Activated B cell treated with CpG ODN at 0.5 μM for 24 hours (primary cell): ENCODE measurements at regions of chr2 and their contacts with region 1.

Region 1: DNA sequence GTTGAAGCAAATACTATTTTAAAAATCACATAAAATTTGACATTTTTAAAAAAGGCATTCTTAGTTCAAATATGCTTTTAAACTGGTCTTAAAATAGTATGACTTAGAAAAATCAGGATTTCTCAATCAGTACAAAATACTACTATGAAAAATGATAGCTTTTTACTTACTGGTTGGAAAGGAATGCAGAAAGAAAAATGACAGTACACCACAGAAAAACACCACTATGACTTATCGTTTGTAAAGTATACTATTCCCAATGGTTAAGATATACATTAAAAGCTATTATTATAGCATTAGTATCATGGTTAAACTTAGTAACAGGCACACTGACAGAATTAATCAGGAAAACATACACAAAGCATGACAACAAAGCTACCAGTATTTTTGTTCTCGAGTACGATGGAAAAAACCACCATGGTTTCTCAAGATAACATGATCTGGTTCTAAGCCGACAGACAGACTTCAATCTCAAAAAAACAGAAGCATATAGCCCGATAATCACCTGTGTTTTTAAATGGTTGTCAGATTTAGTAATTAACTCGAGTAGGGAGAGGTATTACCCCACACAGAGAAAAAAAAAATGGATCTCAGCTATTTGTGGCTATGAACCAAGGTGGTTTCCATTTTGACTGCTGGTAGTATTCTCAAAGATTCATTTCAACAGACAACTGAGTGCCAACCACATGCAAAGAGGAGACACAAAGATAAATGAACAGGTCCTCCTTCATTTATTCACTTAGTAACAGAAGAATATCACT is 39.1 kb downstream of the CUL3 start:
- DNase-seq: no peak
- ATAC-seq: no peak
- H3K4me3 Mint-ChIP-seq: peak overlapping the region; percentile 2
- H3K27ac Mint-ChIP-seq: peak overlapping the region; percentile 37
- H3K4me1 Mint-ChIP-seq: peaks cover 57% of the 10 kb centered on the region
- H3K27me3 Mint-ChIP-seq: no peaks in the 10 kb centered on the region
- CTCF ChIP-seq: no peak

Region 2: GRCh38 chr2:223993621-223994232 is 552.3 kb before region 1 on chr2:
- CTCF ChIA-PET with region 1: no interaction called
- POLR2A ChIA-PET with region 1: no interaction called
- intact Hi-C with region 1: no loop called
- DNase-seq: no peak
- ATAC-seq: peak; percentile 67
- H3K4me3 Mint-ChIP-seq: no peak overlapping the region
- H3K27ac Mint-ChIP-seq: no peak overlapping the region
- H3K4me1 Mint-ChIP-seq: no peaks in the 10 kb centered on the region
- H3K27me3 Mint-ChIP-seq: no peaks in the 10 kb centered on the region
- CTCF ChIP-seq: no peak

Region 3: DNA sequence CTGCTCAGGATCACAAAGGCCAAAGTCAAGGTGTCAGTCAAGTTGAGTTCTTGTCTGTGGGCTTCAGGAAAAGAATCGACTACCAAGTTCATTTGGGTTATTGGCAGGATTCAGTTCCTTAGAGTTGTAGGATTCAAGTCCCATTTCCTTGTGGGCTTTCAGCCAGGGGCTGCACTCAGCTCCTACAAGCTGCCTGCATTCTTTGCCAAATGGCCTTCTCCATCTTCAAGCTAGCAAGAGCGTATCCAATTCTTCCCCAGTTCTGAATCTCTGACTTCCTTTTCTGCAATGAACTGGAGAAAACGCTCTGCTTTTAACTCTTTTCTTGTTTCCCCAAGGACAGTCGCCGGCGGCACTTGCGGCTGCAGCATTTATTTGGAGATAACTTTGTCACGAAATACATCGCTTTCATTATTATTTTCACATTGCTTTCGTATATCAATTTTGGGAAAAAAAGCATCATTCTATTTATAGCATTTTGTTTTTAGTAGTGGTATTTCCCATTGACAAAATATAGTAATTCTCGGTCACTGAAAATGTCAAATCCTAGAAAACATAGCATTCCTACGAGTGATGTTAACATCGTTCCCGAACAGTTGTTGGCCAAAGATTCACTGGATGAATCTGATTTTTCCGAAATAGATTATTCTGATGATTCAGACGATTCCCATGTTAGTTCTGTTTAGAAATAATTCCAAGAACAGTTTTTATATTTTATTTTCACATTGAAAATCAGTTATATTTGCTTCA is 447.4 kb before region 1 on chr2:
- CTCF ChIA-PET with region 1: no interaction called
- POLR2A ChIA-PET with region 1: no interaction called
- intact Hi-C with region 1: no loop called
- DNase-seq: no peak
- ATAC-seq: no peak
- H3K4me3 Mint-ChIP-seq: no peak overlapping the region
- H3K27ac Mint-ChIP-seq: no peak overlapping the region
- H3K4me1 Mint-ChIP-seq: peaks cover 4% of the 10 kb centered on the region
- H3K27me3 Mint-ChIP-seq: peaks cover 8% of the 10 kb centered on the region
- CTCF ChIP-seq: no peak

Region 4: DNA sequence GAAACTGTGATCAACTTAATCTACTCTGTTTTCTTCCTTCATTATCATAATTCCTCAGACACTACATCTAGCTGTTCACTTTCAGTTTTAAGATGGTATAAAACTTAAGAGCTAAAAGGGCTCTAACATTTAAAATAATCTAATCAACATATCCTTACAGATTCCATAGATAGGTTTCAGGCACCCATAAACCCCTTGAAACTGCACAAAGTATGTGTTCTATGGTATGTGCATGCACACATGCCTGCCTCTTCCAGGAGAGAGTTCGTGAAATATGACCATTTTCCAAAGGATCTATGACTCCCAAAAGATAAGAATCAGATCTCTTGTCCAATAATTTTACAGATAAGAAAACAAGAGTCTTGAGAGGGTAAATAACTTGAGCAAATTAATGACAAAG is 20.3 kb before region 1 on chr2:
- CTCF ChIA-PET with region 1: no interaction called
- POLR2A ChIA-PET with region 1: interaction called, 6 read pairs
- intact Hi-C with region 1: loop called (anchors 2 kb)
- DNase-seq: no peak
- ATAC-seq: no peak
- H3K4me3 Mint-ChIP-seq: peak overlapping the region; percentile 41
- H3K27ac Mint-ChIP-seq: peak overlapping the region; percentile 74
- H3K4me1 Mint-ChIP-seq: peaks cover 81% of the 10 kb centered on the region
- H3K27me3 Mint-ChIP-seq: no peaks in the 10 kb centered on the region
- CTCF ChIP-seq: no peak

Region 5: GRCh38 chr2:224576088-224576715 is 30.1 kb after region 1 on chr2:
- CTCF ChIA-PET with region 1: no interaction called
- POLR2A ChIA-PET with region 1: no interaction called
- intact Hi-C with region 1: loop called (anchors 5 kb)
- DNase-seq: no peak
- ATAC-seq: peak; percentile 51
- H3K4me3 Mint-ChIP-seq: peak overlapping the region; percentile 52
- H3K27ac Mint-ChIP-seq: peak overlapping the region; percentile 9
- H3K4me1 Mint-ChIP-seq: peaks cover 93% of the 10 kb centered on the region
- H3K27me3 Mint-ChIP-seq: no peaks in the 10 kb centered on the region
- CTCF ChIP-seq: no peak